Activated CD8-positive, alpha-beta T cell treated with anti-CD3 and anti-CD28 coated beads, Interleukin-2, amount 10 ng/mL, durations not matched to agents 7 days and 5 days (primary cell): ENCODE measurements at regions of chr10 and their contacts with region 1.

Region 1: GRCh38 chr10:133329491-133330202 is 7.0 kb downstream of the CALY start:
- DNase-seq: peak; percentile 88
- ATAC-seq: peak; percentile 89
- H3K4me3 Mint-ChIP-seq: peak overlapping the region; percentile 36
- H3K27ac Mint-ChIP-seq: no peak overlapping the region
- H3K4me1 Mint-ChIP-seq: peaks cover 14% of the 10 kb centered on the region
- H3K27me3 Mint-ChIP-seq: peaks cover 61% of the 10 kb centered on the region

Region 2: GRCh38 chr10:133308421-133309110 is 21.1 kb before region 1 on chr10 and contains the starts of genes TUBGCP2 and ZNF511:
- CTCF ChIA-PET with region 1: interaction called, 14 read pairs
- POLR2A ChIA-PET with region 1: no interaction called
- DNase-seq: peak; percentile 89
- ATAC-seq: peak; percentile 73
- H3K4me3 Mint-ChIP-seq: peak within 1 kb of the TSS; percentile 95
- H3K27ac Mint-ChIP-seq: peak within 1 kb of the TSS; percentile 99
- H3K4me1 Mint-ChIP-seq: peaks cover 19% of the 10 kb centered on the region
- H3K27me3 Mint-ChIP-seq: no peaks in the 10 kb centered on the region
- total RNA-seq, gene TUBGCP2: 53.5 to 59.0 TPM
- total RNA-seq, gene ZNF511: 61.4 to 62.6 TPM

Region 3: GRCh38 chr10:133315847-133316246 is 13.8 kb before region 1 on chr10:
- CTCF ChIA-PET with region 1: interaction called, 14 read pairs
- POLR2A ChIA-PET with region 1: no interaction called
- DNase-seq: no peak
- ATAC-seq: peak; percentile 5
- H3K4me3 Mint-ChIP-seq: no peak overlapping the region
- H3K27ac Mint-ChIP-seq: no peak overlapping the region
- H3K4me1 Mint-ChIP-seq: peaks cover 4% of the 10 kb centered on the region
- H3K27me3 Mint-ChIP-seq: peaks cover 10% of the 10 kb centered on the region

Region 4: GRCh38 chr10:133353202-133353959 is 23.7 kb after region 1 on chr10:
- CTCF ChIA-PET with region 1: interaction called, 10 read pairs
- POLR2A ChIA-PET with region 1: no interaction called
- DNase-seq: no peak
- ATAC-seq: no peak
- H3K4me3 Mint-ChIP-seq: no peak overlapping the region
- H3K27ac Mint-ChIP-seq: no peak overlapping the region
- H3K4me1 Mint-ChIP-seq: peaks cover 6% of the 10 kb centered on the region
- H3K27me3 Mint-ChIP-seq: peaks cover 5% of the 10 kb centered on the region

Region 5: GRCh38 chr10:133388973-133389818 is 59.5 kb after region 1 on chr10:
- CTCF ChIA-PET with region 1: interaction called, 10 read pairs
- POLR2A ChIA-PET with region 1: interaction called, 3 read pairs
- DNase-seq: peak; percentile 75
- ATAC-seq: peak; percentile 62
- H3K4me3 Mint-ChIP-seq: peak overlapping the region; percentile 87
- H3K27ac Mint-ChIP-seq: peak overlapping the region; percentile 99
- H3K4me1 Mint-ChIP-seq: peaks cover 44% of the 10 kb centered on the region
- H3K27me3 Mint-ChIP-seq: no peaks in the 10 kb centered on the region